Activated naive CD4-positive, alpha-beta T cell treated with anti-CD3 and anti-CD28 coated beads for 36 hours (primary cell): ENCODE measurements at regions of chr10 and their contacts with region 1.

Region 1: DNA sequence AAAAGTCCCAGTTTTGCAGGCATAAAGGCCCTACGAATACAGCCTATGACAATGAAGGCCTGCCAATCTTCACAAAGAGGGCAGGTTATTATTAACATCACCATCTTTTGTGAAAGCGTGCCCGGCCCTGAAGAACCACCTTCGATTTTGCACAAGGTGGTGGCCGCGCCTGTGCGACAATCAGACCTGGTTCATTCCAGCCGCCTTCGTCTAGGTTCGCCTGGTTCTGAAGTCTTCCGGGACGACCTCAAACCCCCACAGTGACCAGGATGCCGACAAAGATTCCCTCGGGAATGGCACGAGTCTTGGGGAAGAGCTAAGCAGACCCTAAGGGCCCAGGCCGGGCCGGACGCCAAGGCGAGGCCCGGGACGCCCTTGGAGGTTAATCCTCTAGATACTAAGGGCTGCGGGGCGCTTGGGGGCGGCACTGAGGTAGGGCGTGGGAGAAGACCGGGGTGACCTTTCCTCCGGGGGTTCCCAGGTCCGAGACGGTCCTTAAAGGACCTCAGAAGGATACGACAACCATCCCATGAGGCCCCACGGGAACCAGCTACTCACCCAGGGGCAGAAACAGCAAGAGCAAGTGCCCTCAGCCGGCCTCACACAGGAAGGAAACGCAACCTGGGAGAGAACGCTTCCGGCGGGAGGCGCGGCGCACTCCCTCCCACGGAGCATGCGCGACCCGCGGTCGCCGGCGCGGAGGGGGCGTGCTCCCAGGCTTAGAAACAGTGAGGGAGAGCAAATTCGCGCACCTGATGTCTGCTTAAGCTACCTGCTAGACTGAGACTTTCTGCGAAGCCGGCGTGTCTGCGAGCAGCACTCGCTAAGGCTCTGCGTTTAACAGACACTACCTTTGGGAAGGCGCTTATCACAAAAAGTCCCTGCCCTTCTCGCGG is at the start of gene ATAD1:
- DNase-seq: peak; percentile 90
- H3K4me3 Mint-ChIP-seq: peak within 1 kb of the TSS; percentile 87
- H3K27ac Mint-ChIP-seq: peak within 1 kb of the TSS; percentile 94
- H3K4me1 Mint-ChIP-seq: peaks cover 28% of the 10 kb centered on the region
- H3K27me3 Mint-ChIP-seq: no peaks in the 10 kb centered on the region
- total RNA-seq, gene ATAD1: 47.4 to 53.7 TPM

Region 2: DNA sequence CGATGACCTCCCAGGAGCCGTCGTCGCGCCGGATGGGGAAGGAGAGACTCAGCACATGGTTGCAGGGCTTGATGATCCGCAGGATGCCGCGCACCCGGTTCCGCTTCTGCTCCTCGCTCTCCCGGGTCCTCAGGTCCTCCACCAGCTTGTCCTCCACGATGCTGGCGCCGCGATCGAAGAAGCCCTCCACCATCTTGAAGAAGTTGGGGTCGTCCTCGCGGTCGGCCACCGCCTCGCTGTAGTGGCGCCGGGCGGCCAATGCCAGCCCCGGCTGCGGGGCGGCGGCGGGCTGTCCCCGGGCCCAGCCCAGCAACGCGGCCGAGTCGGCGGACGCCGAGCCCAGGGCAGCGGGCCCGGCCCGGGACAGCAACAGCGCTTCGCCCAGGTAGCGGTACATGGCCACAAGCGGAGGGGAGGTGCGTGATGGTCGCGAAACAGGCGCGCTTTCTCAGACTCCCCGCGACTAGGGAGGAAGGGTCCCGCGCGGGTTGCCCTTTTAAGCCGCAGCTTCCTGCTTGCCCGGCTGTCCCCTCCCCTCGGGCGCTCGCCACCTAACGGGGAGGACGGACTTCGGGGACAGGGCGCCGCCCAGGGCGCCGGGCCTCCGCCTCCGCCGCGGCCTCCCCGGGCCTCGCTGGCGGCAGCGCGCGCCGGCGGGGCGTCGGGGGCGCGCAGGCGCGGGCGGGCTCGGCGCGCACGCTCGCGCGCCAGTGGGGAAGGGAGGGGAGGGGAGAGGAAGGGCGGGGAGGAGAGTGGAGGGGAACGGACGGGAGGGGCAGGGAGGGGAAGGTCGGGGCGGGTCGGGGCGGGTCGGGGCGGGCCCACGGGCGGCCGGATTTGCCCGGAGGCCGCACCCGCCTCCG is 723.3 kb before region 1 on chr10 and contains the starts of genes GLUD1 and SHLD2:
- CTCF ChIA-PET with region 1: no interaction called
- intact Hi-C with region 1: loop called (anchors 2 kb)
- DNase-seq: peak; percentile 93
- H3K4me3 Mint-ChIP-seq: peak within 1 kb of the TSS; percentile 96
- H3K27ac Mint-ChIP-seq: peak within 1 kb of the TSS; percentile 92
- H3K4me1 Mint-ChIP-seq: peaks cover 42% of the 10 kb centered on the region
- H3K27me3 Mint-ChIP-seq: no peaks in the 10 kb centered on the region
- total RNA-seq, gene GLUD1: 166 to 168 TPM
- total RNA-seq, gene SHLD2: 16.7 to 17.6 TPM

Region 3: DNA sequence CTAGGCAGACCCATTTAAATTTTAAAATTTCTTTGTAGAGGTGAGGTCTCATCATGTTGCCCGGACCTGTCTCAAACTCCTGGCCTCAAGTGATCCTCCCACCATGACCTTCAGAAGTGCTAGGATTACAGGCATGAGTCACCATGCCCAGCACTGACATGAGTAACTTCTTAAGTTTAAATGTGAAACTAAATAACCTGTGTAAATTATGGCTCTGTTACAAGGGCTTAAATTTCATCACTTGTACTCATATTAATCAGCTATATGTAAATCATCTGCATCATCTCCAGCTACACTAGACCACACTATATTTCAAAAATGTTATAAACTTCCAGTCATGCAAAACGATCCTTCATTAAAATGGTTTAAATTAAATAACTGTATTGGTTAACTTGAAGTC is 56.0 kb before region 1 on chr10:
- CTCF ChIA-PET with region 1: no interaction called
- intact Hi-C with region 1: loop called (anchors 1 kb)
- DNase-seq: peak; percentile 77
- H3K4me3 Mint-ChIP-seq: no peak overlapping the region
- H3K27ac Mint-ChIP-seq: peak overlapping the region; percentile 86
- H3K4me1 Mint-ChIP-seq: peaks cover 37% of the 10 kb centered on the region
- H3K27me3 Mint-ChIP-seq: no peaks in the 10 kb centered on the region

Region 4: GRCh38 chr10:87829986-87830729 is 12.3 kb after region 1 on chr10:
- CTCF ChIA-PET with region 1: interaction called, 14 read pairs
- intact Hi-C with region 1: loop called (anchors 1 kb)
- DNase-seq: no peak
- H3K4me3 Mint-ChIP-seq: no peak overlapping the region
- H3K27ac Mint-ChIP-seq: no peak overlapping the region
- H3K4me1 Mint-ChIP-seq: peaks cover 30% of the 10 kb centered on the region
- H3K27me3 Mint-ChIP-seq: no peaks in the 10 kb centered on the region

Region 5: GRCh38 chr10:87915989-87916388 is 98.1 kb after region 1 on chr10:
- CTCF ChIA-PET with region 1: no interaction called
- intact Hi-C with region 1: loop called (anchors 5 kb)
- DNase-seq: no peak
- H3K4me3 Mint-ChIP-seq: no peak overlapping the region
- H3K27ac Mint-ChIP-seq: no peak overlapping the region
- H3K4me1 Mint-ChIP-seq: peaks cover 40% of the 10 kb centered on the region
- H3K27me3 Mint-ChIP-seq: no peaks in the 10 kb centered on the region